Breast epithelium (tissue), 4 donors: ENCODE measurements at regions of chr2 and their contacts with region 1.

Region 1: DNA sequence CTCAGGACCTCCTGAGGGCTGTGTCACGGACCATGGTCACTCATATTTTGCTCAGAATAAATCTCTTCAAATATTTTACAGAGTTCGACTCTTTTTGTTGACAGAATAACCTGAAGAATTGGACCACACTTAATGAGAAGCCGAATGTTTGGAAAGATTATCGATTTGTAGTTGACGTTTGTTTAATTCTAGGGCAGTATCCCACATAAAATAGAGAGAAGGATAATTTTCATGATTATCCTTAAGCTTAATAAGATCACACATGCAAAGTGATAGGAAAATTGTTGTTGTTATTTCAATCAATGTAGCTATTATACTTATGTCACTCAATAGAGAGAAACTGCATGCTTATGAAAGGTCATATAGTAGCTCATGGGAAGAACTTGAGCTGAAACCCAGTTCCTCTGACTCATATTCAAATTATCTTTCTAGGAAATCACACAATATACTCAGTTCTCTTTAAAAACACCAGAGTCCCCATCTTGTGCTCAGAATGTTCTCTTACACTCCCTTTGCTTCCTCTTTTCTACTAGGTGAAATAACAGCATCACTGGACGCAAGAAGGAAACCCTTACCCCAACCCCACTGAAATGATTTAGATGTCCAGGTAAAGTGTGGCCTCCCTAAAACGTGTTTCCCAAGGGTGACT is 982.1 kb downstream of the TSN start:
- DNase-seq: no peak
- H3K4me3 ChIP-seq: no peak overlapping the region
- H3K27ac ChIP-seq: no peak overlapping the region
- H3K4me1 ChIP-seq: no peaks in the 10 kb centered on the region
- H3K27me3 ChIP-seq: no peaks in the 10 kb centered on the region
- CTCF ChIP-seq: no peak
- POLR2A ChIP-seq: no peak

Region 2: GRCh38 chr2:122704109-122704563 is 33.4 kb before region 1 on chr2:
- intact Hi-C with region 1: loop called (anchors 2 kb)
- DNase-seq: no peak
- H3K4me3 ChIP-seq: no peak overlapping the region
- H3K27ac ChIP-seq: no peak overlapping the region
- H3K4me1 ChIP-seq: no peaks in the 10 kb centered on the region
- H3K27me3 ChIP-seq: no peaks in the 10 kb centered on the region
- CTCF ChIP-seq: no peak
- POLR2A ChIP-seq: no peak

Region 3: DNA sequence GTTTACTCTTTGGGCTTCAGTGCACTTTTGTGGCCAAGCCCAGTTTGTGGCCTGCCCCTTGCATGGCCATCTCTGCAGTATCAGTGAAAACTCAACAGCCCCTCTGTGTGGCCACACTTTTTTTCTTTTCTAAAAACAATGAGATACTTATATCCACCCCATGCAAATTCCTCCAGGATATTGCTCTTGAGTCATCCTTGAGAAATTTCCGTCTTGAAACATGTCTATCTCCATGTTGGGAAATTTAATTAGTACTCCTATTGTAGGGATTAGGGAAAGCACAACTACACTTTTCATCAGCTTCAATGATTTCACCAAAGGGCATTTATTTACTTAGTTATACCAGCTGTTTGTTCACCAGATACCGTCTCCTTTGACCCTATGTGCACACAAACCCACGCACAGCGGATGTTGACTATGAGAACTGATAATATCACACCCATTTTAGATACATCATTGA is 11.0 kb after region 1 on chr2:
- intact Hi-C with region 1: no loop called
- DNase-seq: no peak
- H3K4me3 ChIP-seq: no peak overlapping the region
- H3K27ac ChIP-seq: no peak overlapping the region
- H3K4me1 ChIP-seq: no peaks in the 10 kb centered on the region
- H3K27me3 ChIP-seq: no peaks in the 10 kb centered on the region
- CTCF ChIP-seq: no peak
- POLR2A ChIP-seq: no peak

Region 4: DNA sequence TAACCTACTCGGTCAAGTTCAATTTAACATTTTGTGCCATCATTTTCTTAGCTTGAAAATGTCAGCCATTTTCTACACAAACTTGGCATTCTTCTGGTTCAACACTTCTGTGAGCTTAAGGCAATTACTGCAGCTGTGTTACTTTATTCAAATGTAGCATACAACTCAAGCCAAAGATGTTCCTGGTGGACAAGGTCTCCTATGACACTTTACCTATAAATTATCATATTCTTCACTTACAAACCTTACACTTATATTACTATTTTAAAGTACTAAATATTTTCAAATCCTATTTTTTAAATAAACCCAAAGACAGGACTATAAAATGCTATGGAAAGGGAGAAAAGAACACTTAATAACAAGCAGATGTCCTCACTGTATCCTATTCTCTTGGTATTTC is 63.2 kb after region 1 on chr2:
- intact Hi-C with region 1: no loop called
- DNase-seq: no peak
- H3K4me3 ChIP-seq: no peak overlapping the region
- H3K27ac ChIP-seq: no peak overlapping the region
- H3K4me1 ChIP-seq: no peaks in the 10 kb centered on the region
- H3K27me3 ChIP-seq: no peaks in the 10 kb centered on the region
- CTCF ChIP-seq: no peak
- POLR2A ChIP-seq: no peak